Sigmoid colon (tissue), 7 donors: ENCODE measurements at regions of chr12 and their contacts with region 1.

Region 1: GRCh38 chr12:118404876-118405521 is 28.6 kb downstream of the SUDS3 start:
- DNase-seq: peak; percentile 74
- H3K4me3 ChIP-seq: no peak overlapping the region
- H3K27ac ChIP-seq: peak overlapping the region; percentile 17 to 40 (median 27)
- H3K4me1 ChIP-seq: peaks cover 0 to 29% (median 14%) of the 10 kb centered on the region in 4 donors
- H3K27me3 ChIP-seq: no peaks in the 10 kb centered on the region
- CTCF ChIP-seq: peak; percentile 62 to 73 (median 72)
- EP300 ChIP-seq: no peak
- POLR2A ChIP-seq: no peak

Region 2: GRCh38 chr12:118560733-118561132 is 155.7 kb after region 1 on chr12:
- intact Hi-C with region 1: loop called (anchors 10 kb)
- DNase-seq: peak; percentile 79
- H3K4me3 ChIP-seq: no peak overlapping the region
- H3K27ac ChIP-seq: peak overlapping the region in 2 of 4 donors; percentile 19 to 30
- H3K4me1 ChIP-seq: peaks cover 0 to 27% (median 16%) of the 10 kb centered on the region in 4 donors
- H3K27me3 ChIP-seq: no peaks in the 10 kb centered on the region
- CTCF ChIP-seq: no peak
- EP300 ChIP-seq: peak in 3 of 4 donors; percentile 49 to 86 (median 60)
- POLR2A ChIP-seq: no peak

Region 3: DNA sequence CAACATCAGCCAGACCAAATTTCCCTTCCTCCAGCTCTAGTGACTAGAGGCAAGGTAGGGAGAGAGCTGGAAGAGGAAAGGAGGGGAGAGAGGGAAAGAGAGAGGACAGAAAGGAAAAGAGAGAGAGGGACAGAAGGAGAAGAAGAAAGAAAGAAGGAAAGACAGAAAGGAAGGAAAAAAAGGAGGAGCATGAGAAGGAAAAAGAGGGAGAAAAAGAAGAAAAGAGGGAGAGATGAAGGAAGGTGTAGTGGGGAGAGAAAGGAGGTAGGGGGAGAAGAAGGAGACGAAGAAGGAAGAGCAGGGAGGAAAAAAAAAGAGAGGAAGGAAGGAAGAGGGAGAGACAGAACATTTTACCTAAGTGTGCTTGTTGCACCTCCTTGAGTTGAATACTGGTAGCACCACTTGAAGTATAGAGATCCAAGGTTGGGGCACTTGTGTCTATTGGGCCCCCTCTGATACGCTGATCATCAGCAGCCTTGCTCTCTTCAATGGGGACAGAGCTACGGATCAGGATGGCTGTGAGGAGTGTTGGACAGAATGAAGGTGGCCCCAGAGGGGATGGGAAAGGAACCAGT is 203.9 kb after region 1 on chr12:
- intact Hi-C with region 1: loop called (anchors 10 kb)
- DNase-seq: no peak
- H3K4me3 ChIP-seq: no peak overlapping the region
- H3K27ac ChIP-seq: no peak overlapping the region
- H3K4me1 ChIP-seq: peaks cover 0 to 7% (median 0%) of the 10 kb centered on the region in 4 donors
- H3K27me3 ChIP-seq: no peaks in the 10 kb centered on the region
- CTCF ChIP-seq: no peak
- EP300 ChIP-seq: no peak
- POLR2A ChIP-seq: no peak

Region 4: DNA sequence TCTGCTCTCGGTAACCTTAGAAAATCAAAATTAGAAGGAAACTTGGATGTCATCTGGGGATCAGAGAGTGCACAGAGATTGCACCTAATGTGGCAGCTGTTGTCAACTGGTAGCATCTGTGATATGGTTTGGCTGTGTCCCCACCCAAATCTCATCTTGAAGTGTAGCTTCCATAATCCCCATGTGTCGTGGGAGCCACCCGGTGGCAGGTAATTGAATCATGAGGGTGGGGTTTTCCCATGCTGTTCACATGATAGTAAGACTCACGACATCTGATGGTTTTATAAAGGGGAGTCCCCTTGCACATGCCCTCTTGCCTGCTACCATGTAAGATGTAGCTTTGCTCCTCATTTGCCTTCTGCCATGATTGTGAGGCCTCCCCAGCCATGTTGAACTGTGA is 448.6 kb after region 1 on chr12:
- intact Hi-C with region 1: loop called (anchors 2 kb)
- DNase-seq: no peak
- H3K4me3 ChIP-seq: no peak overlapping the region
- H3K27ac ChIP-seq: no peak overlapping the region
- H3K4me1 ChIP-seq: no peaks in the 10 kb centered on the region
- H3K27me3 ChIP-seq: no peaks in the 10 kb centered on the region
- CTCF ChIP-seq: peak in 2 of 4 experiments; percentile 31 to 41
- EP300 ChIP-seq: no peak
- POLR2A ChIP-seq: no peak

Region 5: GRCh38 chr12:119036878-119037825 is 632.2 kb after region 1 on chr12:
- intact Hi-C with region 1: loop called (anchors 2 kb)
- DNase-seq: no peak
- H3K4me3 ChIP-seq: no peak overlapping the region
- H3K27ac ChIP-seq: no peak overlapping the region
- H3K4me1 ChIP-seq: no peaks in the 10 kb centered on the region
- H3K27me3 ChIP-seq: peaks cover 0 to 6% (median 0%) of the 10 kb centered on the region in 3 donors
- CTCF ChIP-seq: peak; percentile 26 to 55 (median 46)
- EP300 ChIP-seq: no peak
- POLR2A ChIP-seq: no peak

Region 6: DNA sequence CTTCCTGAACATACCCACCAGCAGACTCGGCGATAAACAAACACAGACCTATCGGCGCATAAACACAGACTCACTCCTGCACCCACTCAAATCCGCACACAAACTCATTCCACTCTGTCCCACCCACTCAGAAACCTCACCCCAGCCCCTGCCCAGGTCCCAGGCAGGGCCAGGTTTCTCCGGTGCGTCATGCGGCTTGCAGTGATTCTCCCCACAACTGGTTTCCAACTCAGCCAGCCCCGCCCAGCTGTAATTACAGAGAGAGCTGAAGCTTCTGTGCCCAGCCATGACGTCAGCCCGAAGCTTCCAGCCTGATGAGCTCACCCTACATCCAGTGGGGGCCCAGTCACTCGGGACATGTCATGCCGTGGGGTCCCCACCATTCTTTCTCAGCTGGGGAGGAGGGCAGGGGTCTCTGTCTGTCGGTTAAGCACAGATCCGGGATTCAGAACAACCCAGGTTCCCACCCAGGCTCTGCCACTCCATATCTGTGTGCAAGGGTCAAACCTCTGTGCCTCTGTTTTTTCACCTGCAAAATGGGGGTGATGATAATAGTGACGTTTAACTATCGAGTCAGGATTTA is 771.4 kb after region 1 on chr12:
- intact Hi-C with region 1: loop called (anchors 10 kb)
- DNase-seq: peak; percentile 99
- H3K4me3 ChIP-seq: peak overlapping the region; percentile 20 to 55 (median 40)
- H3K27ac ChIP-seq: peak overlapping the region; percentile 91 to 99 (median 96)
- H3K4me1 ChIP-seq: peaks cover 0 to 19% (median 16%) of the 10 kb centered on the region in 4 donors
- H3K27me3 ChIP-seq: no peaks in the 10 kb centered on the region
- CTCF ChIP-seq: no peak
- EP300 ChIP-seq: peak in 2 of 4 donors; percentile 63 to 92
- POLR2A ChIP-seq: peak in 1 of 2 donors; percentile 41

Region 7: GRCh38 chr12:119544765-119545625 is 1140.0 kb after region 1 on chr12:
- intact Hi-C with region 1: loop called (anchors 10 kb)
- DNase-seq: peak; percentile 72
- H3K4me3 ChIP-seq: no peak overlapping the region
- H3K27ac ChIP-seq: no peak overlapping the region
- H3K4me1 ChIP-seq: no peaks in the 10 kb centered on the region
- H3K27me3 ChIP-seq: peaks cover 0 to 9% (median 0%) of the 10 kb centered on the region in 3 donors
- CTCF ChIP-seq: peak; percentile 57 to 86 (median 78)
- EP300 ChIP-seq: no peak
- POLR2A ChIP-seq: no peak